ENCODE measurements at regions of chr12 and their contacts with region 1.

Region 1: DNA sequence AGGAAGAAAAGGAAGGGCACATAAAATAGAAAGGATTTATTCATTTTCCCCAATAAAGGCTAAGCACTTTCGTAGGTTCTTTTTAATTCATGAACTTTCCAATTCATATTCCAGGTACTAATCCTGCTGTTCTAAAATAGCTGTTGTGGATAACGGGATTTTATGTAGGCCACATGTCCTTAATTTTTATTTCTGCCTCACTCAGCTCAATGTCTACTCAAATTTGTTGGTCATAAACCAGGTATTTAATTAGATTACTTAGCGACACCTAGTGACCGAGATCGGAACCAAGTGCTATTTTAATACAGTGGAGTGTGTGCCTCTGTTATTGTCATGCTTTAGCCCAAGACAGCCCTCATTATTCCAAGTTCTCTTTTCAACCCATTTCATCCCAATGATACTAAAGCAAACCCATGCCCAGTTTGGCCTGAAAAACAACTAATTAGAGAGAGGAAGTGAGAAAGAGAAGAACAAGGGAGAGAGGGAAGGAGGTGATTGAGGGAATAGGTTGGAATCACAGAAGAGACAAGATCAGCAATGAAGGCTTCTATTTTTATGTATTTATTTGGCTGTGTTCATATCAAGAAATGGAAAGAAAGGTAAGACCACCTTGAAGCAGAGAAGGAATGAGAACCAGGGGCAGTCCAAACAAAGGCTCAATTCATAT is 45.9 kb upstream of the IFNG-AS1 start:
- H3K4me3 ChIP-seq: no peak overlapping the region
- H3K27ac ChIP-seq: no peak overlapping the region
- H3K4me1 ChIP-seq: no peaks in the 10 kb centered on the region
- CTCF ChIP-seq: peak; percentile 65

Region 2: GRCh38 chr12:67441736-67442346 is 501.5 kb before region 1 on chr12:
- CTCF ChIA-PET with region 1: interaction called, 10 read pairs
- POLR2A ChIA-PET with region 1: no interaction called
- H3K4me3 ChIP-seq: no peak overlapping the region
- H3K27ac ChIP-seq: peak overlapping the region; percentile 43; the same call in 1 of the 2 replicates
- H3K4me1 ChIP-seq: peaks cover 5% of the 10 kb centered on the region
- CTCF ChIP-seq: peak; percentile 88

Region 3: GRCh38 chr12:67648521-67649260 is 294.7 kb before region 1 on chr12 and contains the start of gene DYRK2:
- CTCF ChIA-PET with region 1: interaction called, 10 read pairs
- POLR2A ChIA-PET with region 1: interaction called, 6 read pairs
- H3K4me3 ChIP-seq: peak within 1 kb of the TSS; percentile 96
- H3K27ac ChIP-seq: peak within 1 kb of the TSS; percentile 96
- H3K4me1 ChIP-seq: 0 out of 2 replicates have a peak, but pooled peaks cover 3% of the 10 kb centered on the region
- CTCF ChIP-seq: peak; percentile 17; the same call in 1 of the 2 replicates

Measured in HEK293 (cell line).